ENCODE measurements at regions of chr19 and their contacts with region 1.

Region 1: DNA sequence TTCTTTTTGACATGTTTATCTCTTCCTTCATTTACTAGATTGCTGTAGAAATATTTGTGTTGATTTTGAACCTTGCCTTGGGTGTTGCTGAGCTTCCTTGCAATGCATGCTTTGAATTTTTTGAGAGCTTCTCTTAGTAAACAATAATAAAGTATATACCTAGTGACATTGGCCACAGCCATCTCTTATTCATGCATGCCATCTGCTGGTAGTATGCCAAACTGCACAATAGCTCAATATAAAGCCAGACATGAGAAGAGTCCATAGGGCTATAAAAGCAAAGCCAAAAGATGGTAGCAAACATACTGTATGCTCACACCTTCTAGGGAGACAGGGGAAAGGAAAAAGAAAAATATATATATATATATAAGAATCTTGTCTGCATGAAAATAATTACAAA is 18.9 kb upstream of the ZSCAN5A start:
- DNase-seq: peak; percentile 64
- H3K4me3 ChIP-seq: no peak overlapping the region; a peak in 1 of 4 replicates
- H3K27ac ChIP-seq: no peak overlapping the region
- H3K4me1 ChIP-seq: no peaks in the 10 kb centered on the region
- H3K27me3 ChIP-seq: no peaks in the 10 kb centered on the region
- CTCF ChIP-seq: peak; percentile 82
- EP300 ChIP-seq: no peak
- RAD21 ChIP-seq: peak; percentile 89

Region 2: GRCh38 chr19:56170261-56170660 is 163.2 kb before region 1 on chr19:
- CTCF ChIA-PET with region 1: interaction called, 14 read pairs
- POLR2A ChIA-PET with region 1: no interaction called
- DNase-seq: no peak
- H3K4me3 ChIP-seq: no peak overlapping the region
- H3K27ac ChIP-seq: no peak overlapping the region
- H3K4me1 ChIP-seq: no peaks in the 10 kb centered on the region
- H3K27me3 ChIP-seq: peaks cover 37% of the 10 kb centered on the region; the same call in 1 of the 2 replicates
- CTCF ChIP-seq: no peak
- EP300 ChIP-seq: no peak
- RAD21 ChIP-seq: no peak

Region 3: GRCh38 chr19:56261145-56261544 is 72.4 kb before region 1 on chr19:
- CTCF ChIA-PET with region 1: interaction called, 200 read pairs
- POLR2A ChIA-PET with region 1: no interaction called
- DNase-seq: peak; percentile 69
- H3K4me3 ChIP-seq: no peak overlapping the region
- H3K27ac ChIP-seq: no peak overlapping the region
- H3K4me1 ChIP-seq: peaks cover 0 to 3% of the 10 kb centered on the region in 2 experiments; a peak in 1 of 4 replicates
- H3K27me3 ChIP-seq: no peaks in the 10 kb centered on the region
- CTCF ChIP-seq: no peak
- EP300 ChIP-seq: no peak
- RAD21 ChIP-seq: no peak

Region 4: DNA sequence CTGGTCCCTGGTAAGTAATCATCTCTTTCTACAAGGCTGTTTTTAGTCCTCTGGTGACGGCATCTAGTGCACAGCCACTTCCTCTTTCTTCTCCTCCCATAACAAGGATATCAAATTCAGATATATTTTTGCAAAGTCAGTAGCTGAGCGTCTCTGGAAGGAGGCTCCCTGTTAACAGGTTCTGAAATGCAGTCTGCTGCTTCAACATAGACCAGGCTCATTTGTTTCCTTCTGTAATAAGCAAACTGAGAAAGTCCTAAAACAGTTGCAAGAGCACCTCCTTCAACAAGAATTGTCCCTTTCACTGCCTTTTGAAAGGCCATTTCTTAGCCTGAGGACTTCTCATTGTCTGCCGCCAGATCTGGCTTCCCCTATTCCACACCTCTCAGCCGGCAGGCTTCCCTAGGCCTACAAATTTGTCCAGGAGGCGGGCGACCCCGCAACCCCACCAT is 11.5 kb before region 1 on chr19:
- CTCF ChIA-PET with region 1: interaction called, 15 read pairs
- POLR2A ChIA-PET with region 1: no interaction called
- DNase-seq: no peak
- H3K4me3 ChIP-seq: no peak overlapping the region
- H3K27ac ChIP-seq: no peak overlapping the region
- H3K4me1 ChIP-seq: peaks cover 0 to 6% of the 10 kb centered on the region in 2 experiments; a peak in 1 of 4 replicates
- H3K27me3 ChIP-seq: no peaks in the 10 kb centered on the region
- CTCF ChIP-seq: no peak
- EP300 ChIP-seq: no peak
- RAD21 ChIP-seq: no peak

Measured in SK-N-SH (cell line).